Cardiac septum (tissue), 1 donor: ENCODE measurements at regions of chr7 and their contacts with region 1.

Region 1: DNA sequence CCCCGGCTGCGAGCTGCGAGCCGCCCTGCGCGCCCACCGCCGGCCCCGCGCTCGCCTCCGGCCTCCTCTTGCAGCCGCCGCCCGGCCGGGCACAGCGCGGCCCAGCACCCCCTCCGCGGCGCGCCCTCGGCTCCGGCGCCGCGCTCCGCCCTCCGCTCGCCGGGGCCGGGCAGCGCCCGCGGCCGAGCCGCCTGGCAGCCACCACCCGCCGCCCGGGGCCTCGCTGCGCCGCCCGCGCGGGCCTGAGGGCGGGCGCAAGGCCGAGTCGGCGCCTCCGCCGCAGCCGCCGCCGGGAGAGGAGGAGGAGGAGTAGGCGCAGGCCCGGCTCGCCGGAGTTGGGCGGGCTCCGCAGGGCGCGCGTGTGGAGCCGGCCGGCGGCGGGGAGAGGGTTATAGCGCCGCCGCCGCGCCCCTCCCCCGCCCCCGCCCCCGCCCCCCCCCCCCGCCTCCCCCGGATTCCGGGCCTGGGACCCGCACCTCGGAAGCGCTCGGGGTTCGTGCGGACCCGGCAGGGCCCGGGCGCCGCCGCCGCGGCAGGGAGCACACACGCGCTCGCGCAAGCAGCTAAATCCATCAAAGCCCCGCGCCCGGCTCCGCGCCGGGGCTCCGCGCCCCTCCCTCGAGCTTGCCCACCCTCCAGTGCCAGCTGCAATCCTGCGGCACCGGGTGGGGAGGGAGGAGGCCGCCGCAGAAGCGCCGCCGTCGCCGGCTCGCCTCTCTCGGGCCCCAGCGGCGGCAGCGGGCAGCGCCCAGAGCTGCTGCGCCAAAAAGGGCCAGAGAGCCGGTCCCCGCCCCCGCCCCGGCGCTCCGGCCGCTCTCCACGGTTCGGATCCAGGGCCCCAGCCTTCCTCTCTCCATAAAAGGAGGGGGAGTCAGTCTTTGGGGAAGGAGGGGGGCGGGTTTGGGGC is at the start of gene PDGFA:
- DNase-seq: no peak
- total RNA-seq, gene PDGFA: 38.9 TPM

Region 2: GRCh38 chr7:332646-333392 is 186.9 kb before region 1 on chr7:
- intact Hi-C with region 1: loop called (anchors 2 kb)
- DNase-seq: no peak

Region 3: DNA sequence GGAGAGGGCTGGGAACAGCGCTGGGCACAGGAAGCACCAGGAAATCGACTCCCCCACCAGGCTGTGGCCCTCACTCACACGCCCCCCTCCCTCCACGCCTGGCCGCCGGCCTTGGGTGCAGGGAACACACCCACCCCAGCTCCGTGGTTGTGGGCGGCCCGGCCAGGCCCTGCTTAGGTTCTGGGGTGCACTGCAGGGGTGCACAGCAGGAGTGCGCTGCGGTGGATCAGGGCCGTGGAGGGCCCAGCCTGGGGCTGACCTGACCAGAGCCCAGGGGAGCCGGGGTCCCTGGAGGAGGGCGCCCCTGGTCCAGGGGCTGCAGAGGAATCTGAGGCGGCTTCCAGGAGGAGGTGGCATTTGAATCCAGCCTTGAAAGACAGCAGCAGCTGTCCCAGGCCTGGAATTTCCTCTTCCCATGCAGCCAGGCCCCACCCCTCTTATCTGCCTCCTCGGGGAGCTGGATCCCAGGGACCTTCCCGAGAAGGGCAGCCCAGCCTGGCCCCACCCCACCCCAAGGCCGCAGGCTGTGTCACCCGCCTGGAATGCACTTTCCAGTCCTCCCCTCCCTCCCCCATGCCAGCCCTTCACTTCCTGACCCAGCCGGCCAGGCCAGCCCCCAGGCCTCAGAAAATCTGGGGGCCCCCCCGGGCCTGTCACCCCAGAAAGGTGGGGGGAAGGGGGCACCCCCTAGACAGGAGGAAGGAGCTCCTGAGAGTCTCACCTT is 18.3 kb after region 1 on chr7:
- intact Hi-C with region 1: loop called (anchors 2 kb)
- DNase-seq: peak; percentile 89

Region 4: GRCh38 chr7:568031-568951 is 48.6 kb after region 1 on chr7:
- intact Hi-C with region 1: loop called (anchors 5 kb)
- DNase-seq: no peak

Region 5: DNA sequence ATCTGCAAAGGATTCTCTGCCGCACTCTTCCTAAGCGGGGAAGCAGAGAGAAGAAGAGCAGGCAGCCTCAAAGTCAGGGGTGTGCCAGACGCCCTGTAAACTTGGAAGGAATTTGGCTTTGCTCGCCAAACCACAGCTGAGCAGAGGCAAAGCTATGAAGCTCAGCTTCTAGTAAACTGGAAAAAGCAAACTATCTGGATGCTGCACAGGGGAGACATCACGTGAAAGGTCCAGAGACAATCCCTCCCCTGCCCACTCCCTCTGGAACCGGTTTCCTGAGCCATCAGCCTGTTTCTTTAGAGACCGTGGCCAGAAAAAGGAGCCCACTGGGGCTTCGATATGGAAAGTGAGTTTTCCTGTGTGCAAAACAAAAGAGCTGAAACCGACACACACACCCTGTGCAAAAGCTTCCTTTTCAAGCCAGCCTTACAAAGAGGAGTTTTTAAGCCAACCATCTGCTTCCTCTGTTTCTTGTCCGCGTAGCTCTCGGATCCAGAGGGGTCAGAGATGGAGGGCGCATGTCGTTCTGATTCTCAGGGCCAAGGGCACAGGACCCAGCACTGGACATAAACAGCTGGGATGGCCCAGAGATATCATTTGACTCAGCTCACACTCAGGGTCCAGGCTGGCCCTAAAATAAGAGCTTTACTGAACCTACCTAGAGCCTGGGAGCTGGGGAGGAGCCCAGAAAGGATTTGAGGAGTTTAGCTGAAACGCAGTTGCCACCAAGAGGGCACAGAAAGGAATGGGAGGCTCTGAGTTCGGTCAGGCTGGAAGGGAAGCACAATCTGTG is 148.6 kb after region 1 on chr7:
- intact Hi-C with region 1: loop called (anchors 2 kb)
- DNase-seq: peak; percentile 49

Region 6: GRCh38 chr7:732094-732541 is 212.4 kb after region 1 on chr7:
- intact Hi-C with region 1: loop called (anchors 5 kb)
- DNase-seq: peak; percentile 80

Region 7: DNA sequence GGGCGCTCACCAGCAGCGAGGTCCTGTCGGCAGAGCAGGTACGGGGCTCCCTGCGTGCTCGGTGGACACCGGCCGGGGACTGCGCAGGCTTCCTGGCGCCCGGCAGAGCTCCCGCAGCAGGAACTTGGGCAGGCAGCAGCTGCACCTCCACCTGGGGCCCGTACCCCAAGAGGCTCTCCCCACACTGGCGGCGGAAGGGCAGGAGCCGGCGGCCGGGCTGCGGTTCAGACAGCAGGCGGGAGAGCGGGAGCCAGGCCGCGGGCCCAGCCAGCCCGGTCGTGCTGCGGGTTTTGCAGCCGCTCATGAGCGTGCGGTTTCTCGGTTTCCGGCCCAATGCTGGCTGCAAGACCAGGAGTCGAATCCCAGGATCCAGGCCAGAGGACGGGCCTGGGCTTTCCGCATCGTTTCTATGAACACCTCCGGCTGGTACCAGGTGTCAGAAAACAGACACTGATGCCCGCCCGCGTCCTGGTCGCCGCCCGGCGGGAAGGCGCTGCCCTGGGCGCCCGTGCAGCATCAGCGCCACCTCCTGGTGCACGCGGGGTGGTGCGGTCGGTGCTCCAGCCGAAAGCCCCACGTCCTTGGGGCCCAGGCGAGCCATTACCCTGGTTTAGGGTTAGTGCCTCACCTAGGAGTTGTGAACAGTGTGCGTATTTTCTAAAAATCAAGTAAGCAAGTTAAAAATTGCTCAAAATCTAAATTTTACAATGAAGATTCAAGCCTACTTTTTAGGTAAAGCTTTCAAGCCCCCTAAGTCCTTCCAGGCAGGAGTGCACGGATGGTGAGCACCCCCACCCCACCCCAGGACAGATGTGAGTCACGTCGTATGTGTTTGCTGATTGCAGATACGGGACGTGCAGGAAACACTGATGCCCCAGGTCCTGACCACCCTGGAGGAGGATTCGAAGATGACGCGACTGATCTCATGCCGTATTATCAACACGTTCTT is 254.7 kb after region 1 on chr7:
- intact Hi-C with region 1: loop called (anchors 5 kb)
- DNase-seq: no peak